ENCODE measurements at regions of chr9 and their contacts with region 1.

Region 1: GRCh38 chr9:124320062-124320973 is 62.6 kb downstream of the NEK6 start:
- DNase-seq: peak; percentile 55
- H3K4me3 ChIP-seq: no peak overlapping the region
- H3K27ac ChIP-seq: no peak overlapping the region
- H3K27me3 ChIP-seq: no peaks in the 10 kb centered on the region
- CTCF ChIP-seq: peak; percentile 96

Region 2: GRCh38 chr9:124126571-124127289 is 193.6 kb before region 1 on chr9:
- in situ Hi-C with region 1: loop called (anchors 25 kb)
- DNase-seq: peak; percentile 53
- H3K4me3 ChIP-seq: no peak overlapping the region
- H3K27ac ChIP-seq: no peak overlapping the region
- H3K27me3 ChIP-seq: peaks cover 13% of the 10 kb centered on the region
- CTCF ChIP-seq: peak; percentile 96

Region 3: GRCh38 chr9:124415102-124415851 is 95.0 kb after region 1 on chr9 and contains the start of gene PSMB7:
- in situ Hi-C with region 1: no loop called
- DNase-seq: peak; percentile 96
- H3K4me3 ChIP-seq: peak within 1 kb of the TSS; percentile 100
- H3K27ac ChIP-seq: peak within 1 kb of the TSS; percentile 93
- H3K27me3 ChIP-seq: no peaks in the 10 kb centered on the region
- CTCF ChIP-seq: peak; percentile 88

Region 4: DNA sequence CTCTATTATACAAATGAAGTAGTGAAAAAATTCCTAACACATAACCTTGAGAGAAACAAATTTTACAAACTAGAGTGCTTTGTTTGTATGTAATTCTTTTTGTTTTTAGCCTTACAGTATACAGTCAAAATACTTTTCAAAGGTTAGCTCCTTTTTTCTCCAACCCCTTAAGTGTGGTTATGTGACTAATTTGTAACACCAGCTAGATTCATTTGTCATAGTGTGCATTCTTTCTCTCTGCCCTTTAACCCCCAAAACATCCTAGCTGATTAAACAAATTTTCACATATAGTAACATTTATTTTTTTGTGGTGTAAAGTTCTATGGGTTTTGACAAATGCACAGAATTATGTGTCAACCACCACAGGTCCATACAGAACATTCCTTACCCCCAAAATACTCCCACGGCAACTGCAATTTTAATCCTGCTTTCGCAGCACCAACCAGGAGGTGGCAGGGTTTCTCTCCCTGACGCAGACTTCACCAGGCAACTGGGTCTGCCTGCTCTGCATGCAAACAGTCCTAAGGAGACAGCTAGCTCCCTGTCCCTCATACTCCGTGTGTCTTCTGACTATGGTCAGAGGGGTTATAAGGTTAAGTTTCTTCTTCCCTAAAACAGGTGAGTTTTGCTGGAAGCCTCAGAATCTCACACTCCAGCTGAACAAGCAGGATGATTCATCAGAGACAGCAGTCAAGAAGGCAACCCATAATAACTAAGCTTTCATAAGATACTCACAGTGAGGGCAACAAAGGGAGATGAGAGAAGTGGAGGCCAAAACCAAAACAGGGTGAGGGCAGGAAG is 231.4 kb after region 1 on chr9:
- in situ Hi-C with region 1: no loop called
- DNase-seq: peak; percentile 68
- H3K4me3 ChIP-seq: no peak overlapping the region
- H3K27ac ChIP-seq: peak overlapping the region; percentile 22
- H3K27me3 ChIP-seq: no peaks in the 10 kb centered on the region
- CTCF ChIP-seq: peak; percentile 93

Measured in brain microvascular endothelial cell (primary cell).